ENCODE measurements at regions of chr2 and their contacts with region 1.

Region 1: DNA sequence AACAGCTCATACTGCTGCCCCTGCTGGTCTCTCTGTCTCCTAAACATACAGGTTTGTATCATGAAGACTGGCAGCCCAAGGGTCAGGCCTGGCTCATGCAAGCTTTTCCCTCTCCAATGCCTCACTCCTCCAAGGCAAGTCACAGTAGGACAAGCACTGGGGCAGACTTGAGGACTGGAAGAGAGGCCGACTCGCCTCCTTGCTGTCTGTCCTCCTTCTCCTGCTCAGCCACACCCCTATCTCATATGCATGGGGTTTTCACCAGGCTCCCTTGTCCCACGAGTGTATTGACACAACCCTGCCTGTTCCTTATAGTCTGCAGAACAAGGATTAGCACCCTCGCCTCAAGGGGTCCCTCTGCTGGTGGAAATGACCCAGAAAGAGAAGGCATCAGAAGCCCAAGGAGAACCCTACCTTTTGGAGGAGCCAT is 223.7 kb downstream of the SOX11 start:
- DNase-seq: no peak

Region 2: DNA sequence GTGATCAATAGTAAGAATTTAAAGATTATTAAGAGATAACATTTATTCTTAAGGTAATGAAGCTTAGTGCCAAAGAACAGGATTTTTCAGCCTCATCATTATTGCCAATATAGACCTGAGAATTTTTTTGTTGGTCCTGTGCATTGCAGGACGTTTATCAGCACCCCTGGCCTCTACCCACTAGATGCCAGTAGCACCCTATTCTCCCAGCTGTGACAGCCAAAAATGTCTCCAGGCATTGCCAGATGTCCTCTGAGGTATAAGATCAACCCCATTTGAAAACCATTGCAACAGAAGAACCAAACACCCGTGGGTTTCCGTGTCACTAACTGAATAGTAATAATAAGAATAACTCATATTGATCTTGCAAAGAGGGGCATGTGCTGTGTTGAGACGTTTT is 923.7 kb before region 1 on chr2:
- intact Hi-C with region 1: loop called (anchors 5 kb)
- DNase-seq: no peak

Region 3: GRCh38 chr2:5391362-5391761 is 524.5 kb before region 1 on chr2:
- intact Hi-C with region 1: loop called (anchors 10 kb)
- DNase-seq: no peak

Region 4: GRCh38 chr2:5691975-5692529 is 223.8 kb before region 1 on chr2 and contains the start of gene SOX11:
- intact Hi-C with region 1: loop called (anchors 2 kb)
- DNase-seq: peak; percentile 76
- total RNA-seq, gene SOX11: 2.8 TPM

Region 5: GRCh38 chr2:5749347-5749746 is 166.5 kb before region 1 on chr2:
- intact Hi-C with region 1: loop called (anchors 2 kb)
- DNase-seq: peak; percentile 84

Region 6: GRCh38 chr2:5991290-5991963 is 75.5 kb after region 1 on chr2:
- intact Hi-C with region 1: no loop called
- DNase-seq: no peak